ENCODE measurements at regions of chr1 and their contacts with region 1.

Region 1: GRCh38 chr1:12658531-12659453 is 14.9 kb downstream of the AADACL4 start:
- DNase-seq: peak; percentile 89
- H3K4me3 ChIP-seq: peak overlapping the region in 1 of 2 experiments; percentile 34; a peak in 1 of 4 replicates
- H3K27ac ChIP-seq: no peak overlapping the region
- H3K4me1 ChIP-seq: no peaks in the 10 kb centered on the region
- H3K27me3 ChIP-seq: no peaks in the 10 kb centered on the region
- CTCF ChIP-seq: peak; percentile 89
- EP300 ChIP-seq: no peak
- RAD21 ChIP-seq: peak; percentile 94

Region 2: DNA sequence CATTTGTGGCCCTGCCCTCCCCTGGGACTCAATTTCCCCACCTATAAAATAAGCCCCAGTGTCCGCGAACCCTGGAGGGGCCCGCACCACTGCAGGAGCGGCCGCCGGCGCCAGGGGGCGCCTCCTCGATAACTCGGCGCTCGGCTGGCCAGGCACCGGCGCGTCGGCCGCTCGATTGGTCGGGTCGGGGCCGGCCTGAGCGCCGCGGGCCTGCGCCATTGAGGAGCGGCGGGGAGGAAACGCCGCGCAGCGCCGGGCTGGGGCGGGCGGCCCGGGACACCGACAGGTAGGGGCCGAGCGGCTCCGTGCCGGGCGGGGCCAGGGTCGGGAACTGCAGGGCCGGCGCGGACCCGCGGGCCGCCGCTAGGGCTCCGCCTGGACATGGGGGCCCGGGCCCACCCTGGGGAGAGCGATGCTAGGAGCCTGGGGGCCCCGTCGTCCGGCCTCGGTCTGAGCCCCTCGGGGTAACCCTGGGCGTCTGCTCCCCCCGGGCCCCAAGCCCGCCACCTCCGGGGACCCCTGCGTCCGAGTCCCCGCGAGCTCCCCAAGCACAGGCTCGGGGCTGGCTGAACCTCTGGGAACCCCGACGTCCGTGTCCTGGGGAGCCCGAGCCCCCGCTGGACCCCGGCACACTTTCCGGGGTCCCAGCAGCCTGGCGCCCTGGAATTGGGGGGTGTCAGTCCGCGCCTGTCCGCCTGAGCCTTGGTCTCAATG is 428.8 kb before region 1 on chr1 and contains the start of gene VPS13D:
- CTCF ChIA-PET with region 1: interaction called, 10 read pairs
- POLR2A ChIA-PET with region 1: no interaction called
- DNase-seq: peak; percentile 96
- H3K4me3 ChIP-seq: peak within 1 kb of the TSS; percentile 76 to 85
- H3K27ac ChIP-seq: peak within 1 kb of the TSS in 1 of 2 experiments; percentile 43; a peak in 1 of 4 replicates
- H3K4me1 ChIP-seq: peaks cover 6 to 7% of the 10 kb centered on the region in 2 experiments; a peak in 2 of 4 replicates
- H3K27me3 ChIP-seq: no peaks in the 10 kb centered on the region
- CTCF ChIP-seq: peak; percentile 85
- EP300 ChIP-seq: no peak; a peak in 1 of 4 replicates
- RAD21 ChIP-seq: peak; percentile 17; the same call in 1 of the 2 replicates
- polyA plus RNA-seq, gene VPS13D: 14.4 and 15.0 TPM in 2 replicates

Region 3: GRCh38 chr1:12301518-12302237 is 357.1 kb before region 1 on chr1:
- CTCF ChIA-PET with region 1: interaction called, 10 read pairs
- POLR2A ChIA-PET with region 1: no interaction called
- DNase-seq: no peak
- H3K4me3 ChIP-seq: no peak overlapping the region
- H3K27ac ChIP-seq: no peak overlapping the region
- H3K4me1 ChIP-seq: peaks cover 0 to 8% of the 10 kb centered on the region in 2 experiments; a peak in 1 of 4 replicates
- H3K27me3 ChIP-seq: no peaks in the 10 kb centered on the region
- CTCF ChIP-seq: no peak
- EP300 ChIP-seq: no peak
- RAD21 ChIP-seq: no peak

Region 4: DNA sequence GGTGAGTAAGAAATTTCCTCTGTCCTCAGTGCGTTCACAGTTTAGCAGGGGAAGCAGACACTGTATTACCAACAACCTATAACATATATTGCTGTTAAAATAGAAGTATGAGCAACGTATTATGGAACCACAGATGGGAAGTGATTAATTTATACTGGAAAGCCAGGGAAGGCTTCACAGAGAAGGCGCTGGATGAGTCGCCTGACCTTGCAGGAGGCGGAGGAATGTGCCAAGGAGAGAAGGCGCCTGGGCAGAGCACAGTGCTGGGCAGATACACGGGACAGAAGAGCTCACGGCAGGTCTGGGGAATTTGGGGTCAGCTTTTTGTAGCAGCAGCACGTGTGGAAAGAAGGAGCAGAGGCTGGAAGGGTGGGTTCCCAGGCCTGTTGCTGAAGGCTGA is 157.1 kb before region 1 on chr1:
- CTCF ChIA-PET with region 1: no interaction called
- POLR2A ChIA-PET with region 1: no interaction called
- DNase-seq: no peak
- H3K4me3 ChIP-seq: no peak overlapping the region
- H3K27ac ChIP-seq: peak overlapping the region in 1 of 2 experiments; percentile 10; a peak in 2 of 4 replicates
- H3K4me1 ChIP-seq: peaks cover 10 to 42% of the 10 kb centered on the region in 2 experiments; a peak in 1 of 4 replicates
- H3K27me3 ChIP-seq: no peaks in the 10 kb centered on the region
- CTCF ChIP-seq: no peak
- EP300 ChIP-seq: peak in 1 of 2 experiments; percentile 24; a peak in 1 of 4 replicates
- RAD21 ChIP-seq: no peak

Region 5: DNA sequence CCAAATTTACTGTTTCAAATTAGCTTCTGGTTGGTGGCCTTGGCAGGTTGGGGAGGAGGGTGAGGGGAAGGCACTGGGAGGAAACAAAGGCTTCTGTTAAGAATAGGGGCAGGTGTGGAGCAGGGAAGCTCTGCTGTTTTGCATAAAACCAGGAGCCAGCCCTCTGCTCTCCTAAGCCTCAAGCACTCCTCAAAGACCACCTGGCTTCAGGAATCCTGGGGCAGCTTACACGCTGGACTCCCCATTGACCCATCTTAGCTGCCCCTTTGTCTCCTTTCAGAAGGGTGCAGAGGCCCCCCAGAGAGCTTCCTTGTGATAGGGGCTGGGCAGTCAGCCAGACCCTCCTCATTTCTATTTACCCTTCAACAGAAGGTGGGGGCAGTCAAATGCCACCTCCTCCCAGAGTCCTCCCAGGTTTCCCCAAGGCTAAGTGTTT is 29.3 kb before region 1 on chr1:
- CTCF ChIA-PET with region 1: interaction called, 13 read pairs
- POLR2A ChIA-PET with region 1: no interaction called
- DNase-seq: no peak
- H3K4me3 ChIP-seq: no peak overlapping the region
- H3K27ac ChIP-seq: no peak overlapping the region
- H3K4me1 ChIP-seq: no peaks in the 10 kb centered on the region; a peak in 1 of 4 replicates
- H3K27me3 ChIP-seq: no peaks in the 10 kb centered on the region
- CTCF ChIP-seq: no peak
- EP300 ChIP-seq: no peak
- RAD21 ChIP-seq: no peak

Region 6: DNA sequence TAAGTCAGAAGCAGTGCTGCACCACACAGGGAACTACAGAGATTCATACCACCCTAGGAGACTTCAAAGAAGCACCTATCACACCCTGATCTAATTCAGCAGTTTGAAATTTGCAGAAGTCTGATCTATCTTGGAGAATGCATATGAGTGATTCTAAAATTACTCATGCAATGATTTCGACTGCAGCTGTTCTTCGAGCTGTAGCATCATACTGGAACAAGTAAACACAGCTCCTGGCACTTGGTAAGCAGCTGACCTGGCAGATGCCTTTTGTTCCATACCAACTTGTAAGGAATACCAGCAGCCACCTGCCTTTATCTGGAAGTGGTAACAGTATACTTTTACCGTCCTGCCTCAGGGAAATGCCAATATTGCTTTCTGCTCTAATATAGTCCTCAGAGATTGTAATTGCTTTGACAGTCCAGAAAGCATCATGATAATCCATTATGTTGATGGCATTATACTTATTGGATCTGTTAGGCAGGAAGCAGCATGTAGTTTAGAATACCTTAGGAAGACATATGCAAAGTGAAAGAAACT is 10.8 kb after region 1 on chr1:
- CTCF ChIA-PET with region 1: interaction called, 24 read pairs
- POLR2A ChIA-PET with region 1: no interaction called
- DNase-seq: no peak
- H3K4me3 ChIP-seq: no peak overlapping the region
- H3K27ac ChIP-seq: no peak overlapping the region
- H3K4me1 ChIP-seq: no peaks in the 10 kb centered on the region
- H3K27me3 ChIP-seq: no peaks in the 10 kb centered on the region
- CTCF ChIP-seq: no peak
- EP300 ChIP-seq: no peak
- RAD21 ChIP-seq: no peak

Measured in SK-N-SH (cell line).